A549 (cell line): ENCODE measurements at regions of chr9 and their contacts with region 1.

Region 1: GRCh38 chr9:129121483-129121882 is 10.3 kb downstream of the PTPA start:
- DNase-seq: no peak
- ATAC-seq: no peak
- H3K4me3 ChIP-seq: no peak overlapping the region
- H3K27ac ChIP-seq: no peak overlapping the region
- H3K4me1 ChIP-seq: peaks cover 21% of the 10 kb centered on the region; the same call in 2 of the 3 replicates
- CTCF ChIP-seq: no peak
- EP300 ChIP-seq: no peak
- POLR2A ChIP-seq: no peak
- RAD21 ChIP-seq: no peak

Region 2: DNA sequence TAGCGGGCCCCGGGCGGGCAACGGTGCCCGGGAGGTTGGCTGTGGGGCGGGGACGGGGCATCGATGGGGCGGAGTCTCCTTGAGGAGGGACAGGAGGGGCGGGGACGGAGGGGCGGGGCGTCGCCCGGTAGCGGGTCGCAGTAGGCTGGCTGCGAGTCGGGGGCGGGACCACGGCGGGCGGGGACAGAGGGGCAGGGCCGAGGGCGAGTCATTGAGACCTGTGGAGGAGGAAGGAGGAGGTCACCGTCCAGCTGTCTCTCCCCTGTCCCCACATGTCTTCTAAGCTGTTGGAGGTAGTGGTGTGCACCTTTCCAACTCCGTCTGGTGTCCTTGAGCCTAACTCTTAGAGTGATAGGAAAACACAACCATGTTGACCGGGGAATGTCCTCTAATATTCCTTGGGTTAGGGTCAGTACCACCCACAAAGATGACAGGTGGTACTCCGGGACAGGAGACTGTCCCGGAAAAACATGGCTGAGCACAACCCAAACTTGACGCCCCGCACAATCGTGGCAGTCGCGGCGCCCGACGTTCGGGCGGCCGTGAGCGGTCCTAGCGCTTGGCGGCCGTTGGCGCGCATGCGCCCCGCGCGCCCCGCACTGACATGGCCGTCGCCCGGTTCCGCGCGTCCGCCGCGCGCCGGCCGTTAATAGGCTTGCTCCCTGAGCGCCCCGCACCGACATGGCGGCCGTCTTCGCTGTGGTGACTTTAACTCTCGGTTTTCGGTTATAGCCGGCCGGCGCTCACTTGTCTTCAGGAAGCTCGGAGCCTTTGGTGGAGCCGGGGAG is 10.5 kb before region 1 on chr9 and contains the starts of genes CRAT and PTPA:
- CTCF ChIA-PET with region 1: interaction called, 12 read pairs
- POLR2A ChIA-PET with region 1: no interaction called
- DNase-seq: peak; percentile 96 to 97
- ATAC-seq: peak; percentile 78 to 91
- H3K4me3 ChIP-seq: peak within 1 kb of the TSS; percentile 61
- H3K27ac ChIP-seq: peak within 1 kb of the TSS; percentile 92 to 97
- H3K4me1 ChIP-seq: peaks cover 32% of the 10 kb centered on the region
- CTCF ChIP-seq: no peak
- EP300 ChIP-seq: no peak
- POLR2A ChIP-seq: peak; percentile 97
- RAD21 ChIP-seq: no peak
- polyA plus RNA-seq, gene CRAT: 20.5 and 20.8 TPM in 2 replicates
- polyA plus RNA-seq, gene PTPA: 140 and 149 TPM in 2 replicates

Region 3: GRCh38 chr9:129352146-129352865 is 230.8 kb after region 1 on chr9:
- CTCF ChIA-PET with region 1: no interaction called
- POLR2A ChIA-PET with region 1: no interaction called
- DNase-seq: no peak
- ATAC-seq: peak in 1 of 2 experiments; percentile 21; a peak in 3 of 6 replicates
- H3K4me3 ChIP-seq: peak overlapping the region; percentile 60
- H3K27ac ChIP-seq: peak overlapping the region; percentile 98 to 99
- H3K4me1 ChIP-seq: peaks cover 60% of the 10 kb centered on the region
- CTCF ChIP-seq: no peak
- EP300 ChIP-seq: no peak
- POLR2A ChIP-seq: no peak
- RAD21 ChIP-seq: no peak